ENCODE measurements at regions of chr18 and their contacts with region 1.

Region 1: DNA sequence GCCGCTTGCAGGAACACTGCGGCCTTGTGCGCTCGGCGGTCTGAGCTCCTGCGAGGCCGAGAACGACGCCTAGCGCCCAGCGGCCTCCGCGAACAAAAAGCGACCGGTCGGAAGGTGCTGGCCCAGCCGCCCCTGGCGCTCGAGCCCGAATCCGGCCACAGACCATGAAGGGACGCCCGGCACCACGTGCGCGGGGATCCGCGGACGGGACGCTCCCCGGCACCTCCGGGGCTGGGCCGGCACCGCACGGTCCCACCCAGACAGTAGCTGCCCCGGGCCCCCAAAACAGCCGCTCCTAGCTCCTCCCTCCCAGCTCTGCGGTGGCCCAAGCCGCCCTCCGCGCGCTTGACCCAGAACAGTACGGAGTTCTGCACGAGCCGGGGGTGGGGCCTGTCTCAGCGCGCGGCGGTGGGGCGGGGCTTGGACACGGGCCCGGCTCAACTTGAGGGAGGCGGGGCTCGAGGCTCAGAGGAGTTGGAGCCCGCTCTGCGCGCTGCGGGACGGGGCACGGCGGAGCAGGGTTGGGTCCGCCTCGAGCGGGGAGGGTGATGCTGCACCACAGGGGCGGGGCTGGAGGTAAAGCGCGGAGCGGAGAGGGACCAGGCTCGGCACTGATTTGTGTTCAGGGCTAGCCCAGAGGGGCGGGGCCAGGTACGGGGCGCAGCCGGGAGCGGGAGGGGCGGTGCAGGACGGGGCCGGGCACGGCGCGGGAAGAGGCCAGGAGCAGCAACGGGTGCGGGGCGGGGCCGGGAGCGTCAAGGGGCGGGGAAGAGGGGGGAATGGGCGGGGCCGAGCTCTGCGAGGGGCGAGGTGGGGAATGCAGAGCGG is 538 bp upstream of the IMPA2 start:
- DNase-seq: peak; percentile 100
- H3K4me3 ChIP-seq: peak overlapping the region; percentile 70 to 97 (median 89)
- H3K27ac ChIP-seq: peak overlapping the region; percentile 39 to 97 (median 93)
- H3K4me1 ChIP-seq: peaks cover 10 to 61% (median 39%) of the 10 kb centered on the region in 6 donors
- H3K27me3 ChIP-seq: no peaks in the 10 kb centered on the region
- CTCF ChIP-seq: peak in 2 of 11 experiments; percentile 6 to 11
- POLR2A ChIP-seq: peak in 2 of 3 donors; percentile 60 to 72

Region 2: DNA sequence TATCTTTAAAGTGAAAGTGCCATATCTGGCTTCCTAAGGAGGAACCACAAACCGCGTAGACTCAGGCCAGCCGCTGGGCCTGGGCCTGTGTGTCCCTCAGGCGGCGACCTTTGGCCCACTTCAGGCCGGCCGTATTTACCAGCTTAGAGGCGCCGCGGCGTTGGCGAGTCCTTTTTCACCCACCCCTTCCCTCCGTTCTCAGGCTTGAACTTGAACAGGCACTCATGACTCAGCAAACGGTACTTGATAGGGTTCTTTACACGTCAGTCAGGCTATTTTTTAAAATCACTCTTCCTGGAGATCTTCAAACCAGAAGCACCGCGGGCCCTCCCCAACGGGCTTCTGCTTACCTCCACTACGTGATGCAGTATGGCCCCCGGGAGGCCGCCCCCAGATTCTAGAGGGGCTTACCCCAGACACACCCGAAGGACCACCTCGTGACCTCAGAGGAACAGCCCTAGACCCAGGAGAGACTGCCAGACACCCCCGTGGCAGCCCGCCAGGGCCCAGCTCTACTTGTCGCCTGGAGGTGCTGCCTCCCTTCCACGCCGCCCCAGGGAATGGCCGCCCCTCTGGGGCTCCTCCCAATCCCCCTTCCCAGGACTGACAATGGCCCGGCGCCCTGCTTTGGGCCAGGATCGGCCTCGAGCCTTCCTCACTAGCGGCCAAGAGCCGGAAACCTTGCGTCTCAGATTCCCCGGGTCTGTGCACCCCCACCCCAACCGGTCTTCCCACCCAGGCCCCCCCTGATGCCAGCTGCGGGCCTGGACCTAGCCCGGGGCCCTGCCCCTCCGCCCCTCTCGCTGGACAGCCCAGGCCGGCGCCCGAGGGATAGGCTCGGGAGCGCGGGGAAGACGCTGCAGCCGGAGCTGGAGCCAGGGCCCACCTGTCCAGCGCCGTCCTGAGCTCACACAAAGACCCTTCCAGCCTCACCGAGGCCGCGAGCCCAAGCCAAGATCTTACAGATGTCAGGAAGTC is 33.3 kb before region 1 on chr18:
- intact Hi-C with region 1: loop called (anchors 5 kb)
- DNase-seq: peak; percentile 96
- H3K4me3 ChIP-seq: peak overlapping the region; percentile 27 to 71 (median 44)
- H3K27ac ChIP-seq: peak overlapping the region; percentile 91 to 95 (median 94)
- H3K4me1 ChIP-seq: peaks cover 6 to 24% (median 21%) of the 10 kb centered on the region in 6 donors
- H3K27me3 ChIP-seq: no peaks in the 10 kb centered on the region
- CTCF ChIP-seq: peak in 3 of 11 experiments; percentile 15 to 28 (median 15)
- POLR2A ChIP-seq: peak in 1 of 3 donors; percentile 69

Region 3: GRCh38 chr18:12121175-12122042 is 140.6 kb after region 1 on chr18:
- intact Hi-C with region 1: no loop called
- DNase-seq: no peak
- H3K4me3 ChIP-seq: no peak overlapping the region
- H3K27ac ChIP-seq: no peak overlapping the region
- H3K4me1 ChIP-seq: no peaks in the 10 kb centered on the region
- H3K27me3 ChIP-seq: peaks cover 0 to 15% (median 0%) of the 10 kb centered on the region in 7 donors
- CTCF ChIP-seq: no peak
- POLR2A ChIP-seq: no peak

Region 4: DNA sequence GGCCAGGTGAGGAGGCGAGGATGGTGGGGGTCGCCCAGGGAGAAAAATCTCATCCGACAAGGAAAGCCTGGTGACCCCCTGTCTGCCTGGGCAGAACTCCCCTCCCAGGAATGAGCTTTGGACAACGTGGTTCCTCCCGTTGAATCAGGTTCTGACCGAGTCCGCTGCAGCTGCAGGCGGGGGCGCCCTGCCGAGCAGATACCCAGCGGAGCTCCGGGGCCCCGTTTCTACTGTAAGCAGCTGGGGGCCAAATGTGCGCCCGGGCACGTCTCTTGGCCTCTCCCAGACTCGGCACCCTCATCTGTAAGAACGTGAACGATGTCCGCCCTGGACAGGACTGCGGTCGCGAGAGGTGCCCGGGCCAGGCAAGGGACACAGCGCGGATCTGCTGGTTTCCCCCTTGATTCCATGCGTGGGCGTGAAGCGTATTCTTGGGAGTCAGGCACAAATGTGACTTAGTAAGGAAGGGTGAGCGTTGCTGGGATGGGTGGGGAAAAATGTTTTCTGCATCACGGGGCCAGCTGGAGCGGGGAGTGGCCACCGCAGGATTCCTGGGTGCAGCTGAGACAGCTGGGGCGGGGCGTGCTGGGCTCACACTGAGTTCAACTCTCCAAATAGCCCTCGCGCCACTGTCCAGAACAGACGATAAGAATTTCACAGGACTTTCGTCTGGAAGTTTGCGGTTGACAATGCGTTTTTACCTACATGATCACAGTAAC is 307.1 kb after region 1 on chr18:
- intact Hi-C with region 1: no loop called
- DNase-seq: peak; percentile 63
- H3K4me3 ChIP-seq: peak overlapping the region in 5 of 8 donors; percentile 8 to 57 (median 22)
- H3K27ac ChIP-seq: peak overlapping the region in 3 of 8 donors; percentile 7 to 38 (median 23)
- H3K4me1 ChIP-seq: peaks cover 6 to 22% (median 17%) of the 10 kb centered on the region in 6 donors
- H3K27me3 ChIP-seq: peaks cover 0 to 69% (median 20%) of the 10 kb centered on the region in 7 donors
- CTCF ChIP-seq: no peak
- POLR2A ChIP-seq: no peak

Measured in spleen (tissue), 13 donors.